Activated CD8-positive, alpha-beta memory T cell treated with anti-CD3 and anti-CD28 coated beads, Interleukin-2, amount 10 ng/mL, durations not matched to agents 7 days and 5 days (primary cell): ENCODE measurements at regions of chr17 and their contacts with region 1.

Region 1: GRCh38 chr17:1908699-1909309 is 79.0 kb downstream of the RPA1 start:
- DNase-seq: peak; percentile 68
- ATAC-seq: peak; percentile 86
- H3K4me3 Mint-ChIP-seq: no peak overlapping the region
- H3K27ac Mint-ChIP-seq: no peak overlapping the region
- H3K4me1 Mint-ChIP-seq: peaks cover 7% of the 10 kb centered on the region
- H3K27me3 Mint-ChIP-seq: peaks cover 71% of the 10 kb centered on the region

Region 2: GRCh38 chr17:2029911-2030778 is 121.3 kb after region 1 on chr17 and contains the start of gene DPH1:
- CTCF ChIA-PET with region 1: interaction called, 27 read pairs
- DNase-seq: peak; percentile 91
- ATAC-seq: peak; percentile 91
- H3K4me3 Mint-ChIP-seq: peak within 1 kb of the TSS; percentile 89
- H3K27ac Mint-ChIP-seq: peak within 1 kb of the TSS; percentile 81
- H3K4me1 Mint-ChIP-seq: peaks cover 19% of the 10 kb centered on the region
- H3K27me3 Mint-ChIP-seq: peaks cover 36% of the 10 kb centered on the region
- total RNA-seq, gene DPH1: 29.2 to 37.5 TPM